ENCODE measurements at regions of chr3 and their contacts with region 1.

Region 1: GRCh38 chr3:149527531-149528339 is 53.2 kb downstream of the TM4SF4 start:
- DNase-seq: no peak
- ATAC-seq: peak; percentile 79 to 89 (median 82)
- H3K4me3 ChIP-seq: no peak overlapping the region
- H3K27ac ChIP-seq: peak overlapping the region; percentile 17
- H3K4me1 ChIP-seq: peaks cover 17% of the 10 kb centered on the region
- H3K27me3 ChIP-seq: no peaks in the 10 kb centered on the region
- CTCF ChIP-seq: peak; percentile 24

Region 2: GRCh38 chr3:149494022-149494758 is 33.5 kb before region 1 on chr3:
- intact Hi-C with region 1: no loop called
- DNase-seq: peak in 1 of 2 donors; percentile 43
- ATAC-seq: peak; percentile 55 to 80 (median 64)
- H3K4me3 ChIP-seq: no peak overlapping the region
- H3K27ac ChIP-seq: no peak overlapping the region
- H3K4me1 ChIP-seq: peaks cover 9% of the 10 kb centered on the region
- H3K27me3 ChIP-seq: no peaks in the 10 kb centered on the region
- CTCF ChIP-seq: peak; percentile 74

Region 3: DNA sequence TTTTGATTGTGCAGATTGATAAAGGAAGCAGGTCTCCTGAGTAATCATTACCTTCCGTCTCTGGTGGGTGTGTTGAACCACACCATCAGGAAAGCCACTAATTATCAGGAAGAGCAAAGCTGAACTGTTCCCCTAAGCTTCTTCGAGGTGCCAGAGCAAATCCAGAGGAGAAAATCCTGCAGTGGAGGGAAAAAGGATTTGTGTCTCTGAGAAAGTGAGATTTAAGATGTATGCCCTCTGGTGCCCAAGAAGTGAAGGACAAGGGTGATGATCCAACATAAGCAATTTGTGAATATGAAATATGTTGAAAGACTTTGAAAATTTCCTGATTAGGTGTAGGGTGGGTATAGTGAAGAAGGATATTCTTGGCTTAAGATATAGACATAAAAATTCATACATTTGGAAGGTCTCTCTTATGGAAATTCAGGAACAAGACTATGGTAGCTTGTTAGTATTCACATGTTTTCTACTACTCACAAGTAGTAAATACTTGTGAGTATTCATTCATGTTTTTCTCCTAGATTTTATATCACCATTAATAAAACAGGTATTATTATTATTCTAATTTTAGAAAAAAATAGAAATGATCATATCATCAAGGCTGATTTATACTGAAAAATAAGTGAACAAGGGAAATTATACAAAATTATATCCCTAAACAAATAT is 189.8 kb after region 1 on chr3:
- intact Hi-C with region 1: loop called (anchors 5 kb)
- DNase-seq: no peak
- ATAC-seq: peak; percentile 55 to 74 (median 70)
- H3K4me3 ChIP-seq: no peak overlapping the region
- H3K27ac ChIP-seq: no peak overlapping the region
- H3K4me1 ChIP-seq: no peaks in the 10 kb centered on the region
- H3K27me3 ChIP-seq: no peaks in the 10 kb centered on the region
- CTCF ChIP-seq: peak; percentile 82

Region 4: DNA sequence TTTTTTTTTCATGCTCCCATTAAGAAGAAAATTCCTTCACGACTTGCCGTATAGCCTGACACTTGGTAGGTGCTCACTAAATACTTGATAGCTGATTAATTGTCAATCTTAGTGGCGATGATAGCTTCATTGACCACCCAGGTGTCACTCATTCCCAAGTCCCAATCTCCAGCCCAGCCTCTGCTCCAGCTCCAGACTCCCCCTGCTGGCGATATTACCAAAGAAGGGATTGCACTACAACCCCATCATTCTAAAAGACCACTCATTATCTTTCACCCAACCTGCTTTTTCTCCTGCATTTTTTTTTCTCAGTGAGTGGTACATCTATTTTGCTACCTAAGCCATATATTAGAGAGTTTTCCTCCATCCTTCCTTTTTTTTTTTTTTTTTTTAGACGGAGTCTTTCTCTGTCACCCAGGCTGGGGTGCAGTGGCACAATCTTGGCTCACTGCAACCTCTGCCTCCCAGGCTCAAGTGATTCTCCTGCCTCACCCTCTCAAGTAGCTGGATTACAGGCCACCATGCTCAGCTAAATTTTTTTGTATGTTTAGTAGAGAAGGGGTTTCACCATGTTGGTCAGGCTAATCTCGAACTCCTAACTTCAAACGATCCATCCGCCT is 244.0 kb after region 1 on chr3:
- intact Hi-C with region 1: loop called in 1 of 2 experiments (anchors 5 kb)
- DNase-seq: no peak
- ATAC-seq: peak in 3 of 4 donors; percentile 52 to 73 (median 57)
- H3K4me3 ChIP-seq: no peak overlapping the region
- H3K27ac ChIP-seq: no peak overlapping the region
- H3K4me1 ChIP-seq: no peaks in the 10 kb centered on the region
- H3K27me3 ChIP-seq: peaks cover 0 to 3% (median 0%) of the 10 kb centered on the region in 3 donors
- CTCF ChIP-seq: peak; percentile 69